PC-3 (cell line): ENCODE measurements at regions of chr14 and their contacts with region 1.

Region 1: DNA sequence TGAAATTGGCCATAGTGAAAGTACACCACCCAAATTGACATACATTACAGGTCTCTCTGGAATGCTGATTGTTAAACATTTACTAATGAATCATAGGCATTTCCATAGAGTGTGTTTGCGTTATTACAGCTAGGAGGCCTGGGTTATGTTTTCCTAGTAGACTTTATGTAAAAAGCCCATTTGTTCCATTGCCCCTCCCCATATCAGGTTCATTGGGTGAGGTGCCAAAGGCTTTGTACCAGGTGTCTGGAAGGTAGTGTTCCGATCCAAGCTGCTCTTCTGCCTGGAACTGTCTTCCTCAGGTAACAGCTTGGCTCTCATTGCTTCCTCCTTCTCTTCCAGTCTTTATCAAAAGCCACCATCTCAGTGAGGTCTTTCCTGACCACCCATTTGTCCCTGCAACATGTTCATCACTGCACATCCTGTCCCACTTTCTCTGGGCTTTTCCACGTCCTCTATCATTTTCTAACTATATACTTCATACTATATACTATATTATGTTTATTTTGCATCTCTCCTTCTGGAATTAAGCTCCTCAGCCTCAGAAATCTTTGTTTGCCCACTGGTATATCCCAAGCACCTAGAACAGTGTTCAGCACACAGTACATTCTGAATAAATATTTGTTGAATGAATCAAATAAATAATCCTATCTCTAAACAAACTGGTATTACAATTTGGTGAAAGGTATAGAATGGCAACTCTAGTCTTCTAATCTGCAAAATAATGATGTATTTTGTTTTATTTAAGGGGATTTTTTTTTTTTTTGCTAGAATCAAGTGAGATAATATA is 252.3 kb downstream of the KTN1 start:
- DNase-seq: peak; percentile 100
- ATAC-seq: peak; percentile 96
- H3K4me3 ChIP-seq: peak overlapping the region; percentile 31
- H3K27ac ChIP-seq: peak overlapping the region; percentile 91
- H3K4me1 ChIP-seq: peaks cover 40% of the 10 kb centered on the region
- H3K27me3 ChIP-seq: no peaks in the 10 kb centered on the region
- CTCF ChIP-seq: no peak

Region 2: GRCh38 chr14:55458800-55459515 is 373.4 kb before region 1 on chr14:
- CTCF ChIA-PET with region 1: no interaction called
- POLR2A ChIA-PET with region 1: no interaction called
- intact Hi-C with region 1: no loop called
- DNase-seq: peak; percentile 97
- ATAC-seq: peak; percentile 63
- H3K4me3 ChIP-seq: peak overlapping the region; percentile 12
- H3K27ac ChIP-seq: peak overlapping the region; percentile 74
- H3K4me1 ChIP-seq: peaks cover 49% of the 10 kb centered on the region
- H3K27me3 ChIP-seq: no peaks in the 10 kb centered on the region
- CTCF ChIP-seq: no peak

Region 3: GRCh38 chr14:55721353-55721752 is 111.0 kb before region 1 on chr14:
- CTCF ChIA-PET with region 1: no interaction called
- POLR2A ChIA-PET with region 1: no interaction called
- intact Hi-C with region 1: no loop called
- DNase-seq: peak; percentile 93
- ATAC-seq: peak; percentile 86
- H3K4me3 ChIP-seq: no peak overlapping the region
- H3K27ac ChIP-seq: no peak overlapping the region
- H3K4me1 ChIP-seq: peaks cover 13% of the 10 kb centered on the region
- H3K27me3 ChIP-seq: no peaks in the 10 kb centered on the region
- CTCF ChIP-seq: peak; percentile 38; the same call in 1 of the 2 replicates

Region 4: GRCh38 chr14:55731881-55732498 is 100.3 kb before region 1 on chr14:
- CTCF ChIA-PET with region 1: interaction called, 3 read pairs
- POLR2A ChIA-PET with region 1: no interaction called
- intact Hi-C with region 1: loop called (anchors 1 kb)
- DNase-seq: peak; percentile 80
- ATAC-seq: peak; percentile 57
- H3K4me3 ChIP-seq: no peak overlapping the region
- H3K27ac ChIP-seq: no peak overlapping the region
- H3K4me1 ChIP-seq: peaks cover 11% of the 10 kb centered on the region
- H3K27me3 ChIP-seq: no peaks in the 10 kb centered on the region
- CTCF ChIP-seq: peak; percentile 98

Region 5: GRCh38 chr14:55752586-55753390 is 79.5 kb before region 1 on chr14:
- CTCF ChIA-PET with region 1: no interaction called
- POLR2A ChIA-PET with region 1: no interaction called
- intact Hi-C with region 1: loop called (anchors 1 kb)
- DNase-seq: peak; percentile 100
- ATAC-seq: peak; percentile 87
- H3K4me3 ChIP-seq: peak overlapping the region; percentile 4; the same call in 1 of the 2 replicates
- H3K27ac ChIP-seq: peak overlapping the region; percentile 44
- H3K4me1 ChIP-seq: peaks cover 44% of the 10 kb centered on the region
- H3K27me3 ChIP-seq: no peaks in the 10 kb centered on the region
- CTCF ChIP-seq: no peak

Region 6: GRCh38 chr14:55807059-55807499 is 25.2 kb before region 1 on chr14:
- CTCF ChIA-PET with region 1: interaction called, 3 read pairs
- POLR2A ChIA-PET with region 1: interaction called, 3 read pairs
- intact Hi-C with region 1: loop called (anchors 1 kb)
- DNase-seq: peak; percentile 87
- ATAC-seq: peak; percentile 42
- H3K4me3 ChIP-seq: no peak overlapping the region
- H3K27ac ChIP-seq: peak overlapping the region; percentile 60
- H3K4me1 ChIP-seq: peaks cover 40% of the 10 kb centered on the region
- H3K27me3 ChIP-seq: no peaks in the 10 kb centered on the region
- CTCF ChIP-seq: no peak

Region 7: GRCh38 chr14:55867719-55868118 is 35.4 kb after region 1 on chr14:
- CTCF ChIA-PET with region 1: no interaction called
- POLR2A ChIA-PET with region 1: no interaction called
- intact Hi-C with region 1: loop called (anchors 2 kb)
- DNase-seq: peak; percentile 80
- ATAC-seq: peak; percentile 91
- H3K4me3 ChIP-seq: no peak overlapping the region
- H3K27ac ChIP-seq: no peak overlapping the region
- H3K4me1 ChIP-seq: peaks cover 25% of the 10 kb centered on the region
- H3K27me3 ChIP-seq: no peaks in the 10 kb centered on the region
- CTCF ChIP-seq: no peak

Region 8: DNA sequence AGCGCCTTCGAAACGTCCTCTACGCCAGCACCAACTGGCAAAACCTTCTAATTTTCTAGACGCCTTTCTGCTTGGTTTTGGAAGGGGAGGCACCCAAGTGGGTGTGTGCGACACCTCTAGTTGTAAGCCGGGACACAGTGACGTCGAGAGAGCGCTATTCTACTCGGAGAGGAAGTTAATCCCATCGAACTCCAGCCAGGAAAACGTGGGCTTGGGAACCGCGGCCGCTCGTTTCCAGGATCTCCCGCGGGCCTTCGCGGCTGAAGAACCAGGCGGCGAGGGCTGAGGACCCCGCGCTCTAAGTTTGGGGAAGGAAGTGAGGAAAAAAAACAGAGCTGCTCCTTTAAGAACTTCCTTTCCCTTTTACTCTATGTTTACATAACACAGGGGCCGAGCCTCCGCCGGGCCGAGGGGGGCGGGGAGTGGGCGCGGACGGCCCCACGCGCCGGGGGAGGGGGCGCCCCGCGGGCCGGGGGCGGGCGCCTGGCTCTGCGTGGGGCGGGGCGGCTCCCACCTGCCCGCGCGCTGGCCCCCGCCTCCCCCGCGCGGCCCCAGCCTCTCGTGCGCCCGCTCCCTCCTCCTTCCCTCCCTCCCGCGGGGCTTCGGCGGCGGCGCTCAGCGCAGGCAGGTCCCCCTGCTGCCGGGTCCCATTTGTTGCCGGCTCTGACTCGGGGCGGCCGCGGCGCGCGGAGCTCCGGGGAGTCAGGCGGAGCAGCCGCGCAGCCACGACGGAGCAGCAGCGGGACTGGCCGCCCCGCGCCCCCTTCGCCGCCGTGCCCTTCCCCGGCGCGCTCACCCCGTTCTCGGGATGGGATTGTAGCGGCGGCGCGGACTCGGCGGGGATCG is 285.7 kb after region 1 on chr14 and contains the start of gene PELI2:
- CTCF ChIA-PET with region 1: no interaction called
- POLR2A ChIA-PET with region 1: no interaction called
- intact Hi-C with region 1: loop called (anchors 10 kb)
- DNase-seq: peak; percentile 50
- ATAC-seq: peak; percentile 80
- H3K4me3 ChIP-seq: peak within 1 kb of the TSS; percentile 79
- H3K27ac ChIP-seq: no peak within 1 kb of the TSS
- H3K4me1 ChIP-seq: peaks cover 9% of the 10 kb centered on the region
- H3K27me3 ChIP-seq: peaks cover 90% of the 10 kb centered on the region
- CTCF ChIP-seq: no peak
- total RNA-seq, gene PELI2: 0.11 and 0.23 TPM in 2 replicates